Posterior cingulate gyrus (tissue), 11 donors: ENCODE measurements at regions of chr3 and their contacts with region 1.

Region 1: DNA sequence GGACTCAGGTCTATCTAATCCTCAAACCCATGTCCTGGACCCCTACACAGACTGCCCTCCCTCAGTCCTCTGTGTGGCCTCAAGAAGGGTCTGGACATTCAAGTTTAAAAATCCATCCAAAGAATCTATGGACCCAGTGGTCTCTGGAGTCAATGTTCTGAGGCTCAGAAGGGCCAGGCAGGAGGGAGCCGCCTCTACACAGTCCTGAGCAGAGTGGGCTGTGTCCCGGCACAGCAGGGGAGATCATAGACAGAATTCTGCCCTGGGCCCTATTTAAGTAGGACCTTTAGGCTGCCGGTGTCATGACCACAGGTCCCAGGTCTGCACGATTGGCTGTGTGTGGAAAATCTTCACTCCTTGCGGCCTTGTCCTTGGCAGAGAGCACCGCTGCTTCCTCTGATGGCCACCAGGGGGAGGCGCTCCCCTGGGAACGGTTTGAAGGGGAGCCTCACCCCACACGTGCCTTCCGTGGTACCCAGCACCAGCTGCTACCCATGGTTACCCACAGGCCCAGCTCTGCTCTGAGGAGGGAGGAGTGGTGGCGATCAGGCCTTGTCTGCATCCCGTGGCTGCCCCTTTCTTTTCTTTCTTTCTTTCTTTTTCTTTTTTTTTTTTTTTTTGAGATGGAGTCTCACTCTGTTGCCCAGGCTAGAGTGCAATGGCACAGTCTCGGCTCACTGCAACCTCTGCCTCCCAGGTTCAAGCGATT is 37.9 kb downstream of the CHRD start:
- DNase-seq: peak; percentile 30 to 95 (median 75)

Region 2: DNA sequence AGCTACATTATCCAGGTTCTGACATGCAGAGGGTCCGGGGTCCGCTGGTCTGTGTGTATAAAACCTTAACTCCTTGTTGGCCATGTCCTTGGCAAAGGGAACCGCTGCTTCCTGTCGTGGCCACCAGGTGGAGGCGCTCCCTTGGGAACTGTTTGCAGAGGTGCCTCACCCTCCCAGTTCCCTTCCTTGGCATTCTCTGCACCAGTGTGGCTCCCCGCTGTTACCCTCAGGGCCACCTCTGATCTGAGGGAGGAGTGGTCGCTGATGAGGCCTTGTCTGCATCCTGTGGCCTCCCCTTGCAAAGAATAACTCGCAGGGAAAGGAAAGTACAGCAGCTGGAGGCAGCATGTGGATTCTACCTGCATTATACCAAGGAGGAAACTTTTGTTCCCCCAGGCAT is 51.6 kb after region 1 on chr3:
- intact Hi-C with region 1: loop called (anchors 5 kb)
- DNase-seq: peak in 9 of 10 donors; percentile 27 to 90 (median 47)

Region 3: DNA sequence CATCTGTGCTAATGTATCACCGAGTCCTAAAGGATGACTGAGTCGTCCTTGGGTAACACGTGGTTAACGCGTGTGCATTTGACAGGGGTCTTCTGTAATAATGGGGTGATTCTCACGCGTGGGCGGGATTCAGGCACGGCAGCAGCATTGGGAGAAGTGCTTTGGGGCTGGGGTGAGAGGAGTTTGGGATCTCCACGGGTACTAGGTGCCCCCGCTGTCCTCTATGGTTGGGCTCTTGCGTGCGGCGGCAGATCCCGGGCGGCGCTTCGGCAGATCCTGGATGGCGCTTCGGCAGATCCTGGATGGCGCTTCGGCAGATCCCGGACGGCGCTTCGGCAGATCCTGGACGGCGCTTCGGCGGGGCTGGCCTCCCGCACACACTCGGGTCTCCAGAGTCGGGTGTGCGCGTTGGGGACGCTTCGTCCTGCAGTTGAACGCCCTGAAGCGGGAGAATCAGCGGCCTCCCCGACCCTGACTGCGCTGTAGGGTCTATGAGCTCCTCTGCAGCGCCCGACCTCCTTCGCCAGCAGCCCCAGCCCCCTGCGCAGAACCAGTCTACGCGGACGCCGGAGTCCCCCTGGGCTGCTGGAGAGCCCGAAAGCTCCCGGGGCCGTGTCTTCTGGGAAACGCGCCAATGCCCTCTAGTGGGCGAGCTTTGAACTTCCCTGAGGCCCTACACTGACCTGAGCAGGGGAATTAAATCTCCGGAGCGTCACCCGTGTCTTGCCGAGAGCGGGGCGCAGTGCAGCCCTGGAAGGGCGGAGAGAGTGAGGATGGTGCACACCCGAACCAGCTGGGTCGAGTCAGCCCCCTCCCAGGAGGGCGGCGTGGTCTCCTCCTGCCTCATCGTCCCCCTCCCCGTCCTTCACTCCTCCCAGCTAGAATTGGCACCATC is 95.8 kb after region 1 on chr3:
- intact Hi-C with region 1: loop called (anchors 5 kb)
- DNase-seq: peak; percentile 61 to 96 (median 84)

Region 4: DNA sequence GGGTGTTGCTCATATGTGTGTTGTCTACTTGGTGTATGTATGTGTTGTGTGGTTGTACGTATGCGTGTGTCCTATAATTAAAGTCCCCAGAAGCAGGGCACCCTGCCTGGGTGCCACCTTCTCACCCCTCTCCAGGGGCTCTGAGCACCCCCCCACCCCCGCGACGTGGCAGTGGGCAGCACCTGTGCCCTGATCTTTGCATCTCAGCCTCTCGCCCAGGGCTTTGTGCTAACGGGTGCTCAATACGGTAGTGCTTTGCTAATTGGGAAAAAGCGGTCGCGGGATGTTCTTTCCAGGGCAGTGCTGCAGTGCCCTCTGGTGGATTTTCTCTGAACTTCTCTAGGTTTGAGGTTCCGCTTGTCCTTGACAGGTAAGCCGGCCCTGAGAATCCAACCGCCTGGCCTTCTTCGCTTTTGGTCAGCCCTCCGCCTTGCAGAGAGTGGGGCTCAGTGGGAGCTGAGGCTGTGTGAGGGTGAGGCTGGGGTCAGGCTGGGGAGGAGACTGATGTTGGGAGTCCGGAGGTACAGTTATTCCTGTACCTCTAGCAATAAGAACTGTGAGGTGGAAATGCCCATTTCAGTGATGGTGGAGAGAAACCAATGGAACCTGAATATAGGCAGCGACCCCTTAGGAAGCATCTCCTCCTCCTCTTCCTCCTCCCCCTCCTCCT is 126.2 kb after region 1 on chr3:
- intact Hi-C with region 1: loop called (anchors 5 kb)
- DNase-seq: peak; percentile 53 to 95 (median 75)

Region 5: DNA sequence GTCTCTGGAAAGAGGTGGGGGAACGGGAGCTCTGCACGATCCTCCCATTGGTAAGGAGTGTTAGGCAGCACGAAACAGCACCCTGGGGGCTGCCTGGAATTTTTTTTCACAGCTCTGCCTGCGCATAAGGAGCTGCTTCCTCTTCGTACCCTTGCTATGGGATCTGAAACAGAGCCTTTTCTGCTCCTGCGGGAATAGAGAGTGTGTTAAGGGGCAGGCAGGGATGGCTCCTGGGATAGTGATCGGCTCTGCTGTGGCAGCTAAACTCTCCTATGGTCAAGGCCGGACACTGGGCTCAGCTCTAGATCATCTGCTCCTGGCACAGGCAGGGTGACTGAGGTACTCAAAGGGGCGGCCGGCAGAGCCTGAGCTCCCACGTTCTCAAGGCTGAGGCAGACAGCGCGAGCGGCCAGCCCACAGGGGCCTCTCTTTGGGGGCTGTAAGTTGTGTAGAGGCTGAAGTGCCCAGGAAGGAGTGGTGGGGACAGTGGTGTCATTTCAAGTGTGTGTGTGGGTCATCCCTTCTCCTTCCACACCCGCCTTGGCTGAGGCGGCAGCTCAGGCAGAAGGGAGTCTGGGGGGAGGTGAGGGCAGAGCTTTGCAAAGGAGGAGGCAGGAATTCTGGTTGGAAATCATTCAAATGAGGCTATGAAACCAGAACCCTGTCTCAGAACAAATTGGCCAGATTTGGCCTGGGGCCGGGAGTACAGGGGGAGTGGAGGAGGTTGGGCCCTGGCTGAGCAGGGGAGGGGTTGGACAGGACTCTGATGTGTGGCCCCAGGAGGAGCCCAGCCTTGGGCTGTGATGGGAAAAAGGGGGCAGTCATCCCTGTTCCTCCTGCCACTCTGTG is 174.8 kb after region 1 on chr3:
- intact Hi-C with region 1: no loop called
- DNase-seq: peak in 3 of 10 donors; percentile 54 to 70 (median 57)